Ovary (tissue), 10 donors: ENCODE measurements at regions of chr4 and their contacts with region 1.

Region 1: GRCh38 chr4:143404555-143404954 is 67.9 kb downstream of the GAB1 start:
- DNase-seq: no peak
- H3K4me3 ChIP-seq: no peak overlapping the region
- H3K27ac ChIP-seq: no peak overlapping the region
- H3K4me1 ChIP-seq: peaks cover 28% of the 10 kb centered on the region
- H3K27me3 ChIP-seq: no peaks in the 10 kb centered on the region
- CTCF ChIP-seq: no peak
- EP300 ChIP-seq: no peak
- POLR2A ChIP-seq: no peak

Region 2: GRCh38 chr4:143375313-143376073 is 29.1 kb before region 1 on chr4:
- intact Hi-C with region 1: loop called in 1 of 4 experiments (anchors 1 kb)
- DNase-seq: no peak
- H3K4me3 ChIP-seq: no peak overlapping the region
- H3K27ac ChIP-seq: no peak overlapping the region
- H3K4me1 ChIP-seq: peaks cover 19% of the 10 kb centered on the region
- H3K27me3 ChIP-seq: no peaks in the 10 kb centered on the region
- CTCF ChIP-seq: no peak
- EP300 ChIP-seq: no peak
- POLR2A ChIP-seq: no peak